ENCODE measurements at regions of chr10 and their contacts with region 1.

Region 1: GRCh38 chr10:69573056-69573806 is at the start of gene NEUROG3:
- DNase-seq: peak; percentile 56
- ATAC-seq: peak; percentile 2; the same call in 1 of the 2 replicates
- H3K4me3 Mint-ChIP-seq: peak within 1 kb of the TSS; percentile 88
- H3K27ac Mint-ChIP-seq: peak within 1 kb of the TSS; percentile 74; the same call in 1 of the 2 replicates
- H3K4me1 Mint-ChIP-seq: peaks cover 73% of the 10 kb centered on the region
- H3K27me3 Mint-ChIP-seq: peaks cover 100% of the 10 kb centered on the region
- CTCF ChIP-seq: no peak
- total RNA-seq, gene NEUROG3: 1.9 to 2.4 TPM (median 2.0 TPM) in 3 replicates

Region 2: DNA sequence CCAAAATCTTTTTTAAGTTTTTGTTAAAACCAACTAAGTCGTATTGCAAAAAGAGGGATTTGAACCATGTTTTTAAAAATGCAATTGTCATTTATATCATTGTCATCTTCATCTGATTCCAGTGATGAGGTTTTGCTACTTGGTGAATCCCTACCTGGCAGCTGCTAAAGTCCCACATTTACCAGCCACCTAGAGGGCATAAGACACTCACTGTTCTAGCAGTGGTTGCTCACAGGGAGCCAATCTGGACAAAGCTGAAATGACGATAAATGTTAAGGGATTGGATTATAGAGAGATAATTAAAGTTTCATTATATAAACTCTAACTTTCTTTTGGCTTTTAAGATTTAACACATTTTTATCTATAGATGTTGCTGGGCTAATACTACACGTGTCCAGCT is 566.0 kb before region 1 on chr10:
- CTCF ChIA-PET with region 1: no interaction called
- POLR2A ChIA-PET with region 1: no interaction called
- DNase-seq: no peak
- ATAC-seq: no peak
- H3K4me3 Mint-ChIP-seq: no peak overlapping the region
- H3K27ac Mint-ChIP-seq: no peak overlapping the region
- H3K4me1 Mint-ChIP-seq: no peaks in the 10 kb centered on the region
- H3K27me3 Mint-ChIP-seq: no peaks in the 10 kb centered on the region
- CTCF ChIP-seq: no peak

Region 3: DNA sequence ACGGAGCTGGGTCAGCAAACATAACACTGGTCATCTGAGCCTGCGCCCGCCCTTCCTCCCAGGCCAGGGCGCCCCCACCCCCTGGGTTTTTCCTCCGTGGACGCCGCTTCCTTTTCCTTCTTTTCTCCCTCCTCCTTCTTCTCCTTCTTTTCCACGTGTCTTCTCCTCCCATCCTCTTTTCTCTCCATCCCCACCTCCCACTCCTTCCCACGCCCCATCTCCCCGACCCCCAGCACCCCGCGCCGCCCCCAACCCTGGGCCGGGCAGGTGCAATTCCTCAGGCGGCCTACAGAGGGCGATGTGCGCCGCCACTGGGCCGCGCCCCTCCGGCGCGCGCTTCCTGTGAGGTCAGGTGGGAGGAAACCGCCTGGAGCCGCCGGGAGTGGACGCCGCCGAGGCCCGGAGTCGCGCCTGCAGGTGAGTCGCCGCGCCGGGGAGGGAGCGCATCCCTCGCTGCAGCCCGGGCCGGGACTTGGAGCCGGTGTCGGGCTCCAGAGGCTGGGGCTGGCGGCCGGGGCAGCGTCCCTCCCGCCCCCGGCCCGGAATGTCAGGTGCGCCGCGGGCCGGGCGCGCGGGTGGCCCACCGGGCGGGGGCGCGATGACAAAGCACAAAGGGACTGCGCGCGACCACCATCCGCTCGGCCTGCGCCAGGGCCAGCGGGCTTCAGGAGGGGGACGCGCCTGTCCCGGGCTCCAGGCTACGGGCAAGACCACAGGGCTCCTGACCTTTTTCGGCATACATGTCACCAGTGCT is 56.8 kb after region 1 on chr10 and contains the start of gene FAM241B:
- CTCF ChIA-PET with region 1: interaction called, 117 read pairs
- POLR2A ChIA-PET with region 1: interaction called, 3 read pairs
- DNase-seq: peak; percentile 88
- ATAC-seq: peak; percentile 83
- H3K4me3 Mint-ChIP-seq: peak within 1 kb of the TSS; percentile 76
- H3K27ac Mint-ChIP-seq: no peak within 1 kb of the TSS
- H3K4me1 Mint-ChIP-seq: peaks cover 8% of the 10 kb centered on the region
- H3K27me3 Mint-ChIP-seq: peaks cover 15% of the 10 kb centered on the region
- CTCF ChIP-seq: peak; percentile 100
- total RNA-seq, gene FAM241B: 24.4 to 28.9 TPM (median 26.9 TPM) in 3 replicates

Measured in WTC11 (cell line).